Posterior cingulate gyrus (tissue), 11 donors: ENCODE measurements at regions of chr2 and their contacts with region 1.

Region 1: DNA sequence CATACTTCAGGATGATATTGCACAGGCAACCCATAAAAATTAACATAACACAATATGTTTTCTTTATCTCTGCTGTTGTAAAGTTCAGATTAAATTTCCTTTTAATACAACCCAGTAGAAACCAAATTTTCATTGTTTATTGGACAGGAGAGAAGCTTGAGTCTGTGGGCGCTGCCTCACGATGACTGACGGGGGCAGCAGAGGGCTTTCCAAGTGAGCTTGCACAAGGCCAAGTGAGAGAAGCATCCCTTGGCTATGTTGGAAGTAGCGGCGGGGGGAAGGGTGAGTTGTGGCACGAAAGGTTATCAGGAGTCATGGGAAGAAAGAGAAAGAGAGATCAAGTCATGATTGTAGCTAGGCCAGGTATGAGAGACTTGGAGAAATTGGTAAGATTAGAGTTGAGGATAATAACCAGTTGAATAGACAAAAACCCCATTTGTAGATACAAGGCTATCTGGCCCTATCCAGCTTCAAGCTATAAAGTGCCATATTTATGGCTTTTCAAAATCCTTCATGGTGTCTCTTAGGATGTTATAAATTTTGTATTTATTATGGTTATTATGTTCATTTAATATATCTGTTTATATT is 413.7 kb upstream of the FAM98A start:
- DNase-seq: peak; percentile 48 to 97 (median 78)

Region 2: DNA sequence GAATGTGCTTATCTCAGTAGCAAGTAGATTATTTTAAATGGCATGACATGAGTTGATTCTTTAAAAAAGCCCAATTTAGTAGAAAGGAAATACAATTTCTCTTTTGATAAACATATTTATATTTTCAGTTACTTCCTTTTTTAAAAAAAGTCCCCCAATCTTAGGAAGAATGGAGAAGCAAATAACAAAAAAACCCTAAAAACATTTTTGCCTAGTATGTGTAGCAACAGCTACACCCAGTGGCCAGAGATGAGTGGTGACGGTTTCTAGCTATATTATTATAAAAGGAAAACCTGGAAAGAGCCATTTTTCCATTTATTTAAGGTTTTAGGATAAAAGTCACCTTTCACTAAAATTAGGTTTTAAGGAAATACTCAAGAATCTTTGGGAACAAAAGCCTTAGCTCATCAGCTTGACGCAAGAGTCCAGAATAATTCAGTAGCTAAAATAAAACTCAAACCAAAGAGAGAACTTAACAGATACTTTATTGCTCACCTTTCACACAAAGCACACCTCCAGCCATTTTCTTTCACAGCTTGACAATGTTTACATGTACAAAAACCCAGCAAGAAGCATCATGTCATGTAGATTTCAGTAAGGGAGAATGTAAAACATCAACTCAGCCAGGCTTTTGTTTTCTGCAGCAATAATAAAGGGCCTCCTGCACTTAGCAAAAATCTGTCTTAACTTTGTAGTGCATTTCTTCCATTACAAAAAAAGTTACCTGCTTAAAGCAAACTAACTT is 429.4 kb before region 1 on chr2:
- intact Hi-C with region 1: no loop called
- DNase-seq: peak in 3 of 10 donors; percentile 48 to 81 (median 49)

Region 3: GRCh38 chr2:34045101-34045655 is 32.4 kb after region 1 on chr2:
- intact Hi-C with region 1: no loop called
- DNase-seq: no peak

Region 4: DNA sequence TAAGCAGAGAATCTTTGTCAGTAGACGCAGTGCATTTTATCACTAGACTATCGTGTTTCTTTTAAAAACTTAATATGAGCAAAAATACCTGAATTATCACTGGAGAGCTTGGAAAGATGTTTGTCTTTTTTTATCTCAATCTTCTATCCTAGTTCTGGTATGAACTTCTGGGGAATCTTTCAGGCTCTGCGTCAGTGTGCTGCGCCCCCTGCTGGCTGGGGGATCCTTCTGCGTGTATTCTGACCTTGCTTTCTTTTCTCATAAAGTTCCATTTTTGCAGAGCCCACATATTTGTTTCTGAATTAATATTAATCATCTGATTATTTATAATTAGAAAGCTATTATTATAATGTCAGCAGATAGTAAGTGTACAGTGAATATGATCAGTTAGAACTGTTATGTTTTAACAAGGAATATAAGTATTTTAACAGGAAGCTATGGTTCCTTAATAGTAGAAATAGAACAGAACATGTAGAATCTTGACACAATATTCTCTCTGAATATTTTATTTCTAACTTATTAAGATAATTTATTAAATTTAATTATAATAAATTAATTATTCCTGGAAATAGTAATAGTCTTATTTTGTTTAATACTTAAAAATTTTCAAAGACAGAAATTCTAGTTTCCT is 1397.7 kb after region 1 on chr2:
- intact Hi-C with region 1: loop called (anchors 5 kb)
- DNase-seq: peak; percentile 19 to 94 (median 70)